ENCODE measurements at regions of chr15 and their contacts with region 1.

Region 1: DNA sequence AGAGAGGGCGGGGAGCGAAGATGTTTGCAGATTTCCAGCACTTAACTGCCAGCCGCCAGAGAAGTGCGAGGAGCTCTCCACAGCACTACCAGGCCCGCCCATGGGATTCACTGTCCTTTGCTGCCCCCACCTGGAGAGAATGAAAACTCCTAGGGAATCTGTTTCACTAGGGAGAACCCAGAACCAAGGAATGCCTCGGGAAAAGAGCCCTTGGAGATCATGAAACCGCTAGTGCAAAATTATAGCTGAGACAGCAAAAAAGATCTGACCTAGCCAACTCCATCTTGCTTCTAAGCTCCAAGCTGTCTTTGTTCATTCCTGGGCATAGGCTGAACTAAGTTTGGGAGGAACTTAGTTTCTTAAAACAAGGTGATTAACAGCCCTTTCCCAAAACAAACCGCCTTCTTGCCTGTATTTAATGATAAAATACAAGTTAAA is 82.6 kb upstream of the GCNT3 start:
- DNase-seq: peak; percentile 56 to 65 (median 61)
- H3K4me3 ChIP-seq: no peak overlapping the region
- H3K4me3 Mint-ChIP-seq: no peak overlapping the region
- H3K27ac ChIP-seq: no peak overlapping the region
- H3K27ac Mint-ChIP-seq: peak overlapping the region in 1 of 7 donors; percentile 12
- H3K4me1 ChIP-seq: peaks cover 14% of the 10 kb centered on the region
- H3K4me1 Mint-ChIP-seq: peaks cover 9 to 16% (median 13%) of the 10 kb centered on the region in 4 donors
- H3K27me3 ChIP-seq: no peaks in the 10 kb centered on the region
- H3K27me3 Mint-ChIP-seq: peaks cover 0 to 3% of the 10 kb centered on the region in 2 donors

Region 2: GRCh38 chr15:57561041-57561711 is 1967.8 kb before region 1 on chr15:
- CTCF ChIA-PET with region 1: no interaction called
- POLR2A ChIA-PET with region 1: no interaction called
- intact Hi-C with region 1: loop called (anchors 10 kb)
- DNase-seq: peak; percentile 60 to 65 (median 62)
- H3K4me3 ChIP-seq: no peak overlapping the region
- H3K4me3 Mint-ChIP-seq: peak overlapping the region in 7 of 8 donors; percentile 14 to 64 (median 55)
- H3K27ac ChIP-seq: no peak overlapping the region
- H3K27ac Mint-ChIP-seq: peak overlapping the region in 4 of 7 donors; percentile 11 to 59 (median 38)
- H3K4me1 ChIP-seq: peaks cover 24% of the 10 kb centered on the region
- H3K4me1 Mint-ChIP-seq: peaks cover 25 to 43% (median 32%) of the 10 kb centered on the region in 4 donors
- H3K27me3 ChIP-seq: no peaks in the 10 kb centered on the region
- H3K27me3 Mint-ChIP-seq: peaks cover 0 to 1% of the 10 kb centered on the region in 2 donors

Region 3: DNA sequence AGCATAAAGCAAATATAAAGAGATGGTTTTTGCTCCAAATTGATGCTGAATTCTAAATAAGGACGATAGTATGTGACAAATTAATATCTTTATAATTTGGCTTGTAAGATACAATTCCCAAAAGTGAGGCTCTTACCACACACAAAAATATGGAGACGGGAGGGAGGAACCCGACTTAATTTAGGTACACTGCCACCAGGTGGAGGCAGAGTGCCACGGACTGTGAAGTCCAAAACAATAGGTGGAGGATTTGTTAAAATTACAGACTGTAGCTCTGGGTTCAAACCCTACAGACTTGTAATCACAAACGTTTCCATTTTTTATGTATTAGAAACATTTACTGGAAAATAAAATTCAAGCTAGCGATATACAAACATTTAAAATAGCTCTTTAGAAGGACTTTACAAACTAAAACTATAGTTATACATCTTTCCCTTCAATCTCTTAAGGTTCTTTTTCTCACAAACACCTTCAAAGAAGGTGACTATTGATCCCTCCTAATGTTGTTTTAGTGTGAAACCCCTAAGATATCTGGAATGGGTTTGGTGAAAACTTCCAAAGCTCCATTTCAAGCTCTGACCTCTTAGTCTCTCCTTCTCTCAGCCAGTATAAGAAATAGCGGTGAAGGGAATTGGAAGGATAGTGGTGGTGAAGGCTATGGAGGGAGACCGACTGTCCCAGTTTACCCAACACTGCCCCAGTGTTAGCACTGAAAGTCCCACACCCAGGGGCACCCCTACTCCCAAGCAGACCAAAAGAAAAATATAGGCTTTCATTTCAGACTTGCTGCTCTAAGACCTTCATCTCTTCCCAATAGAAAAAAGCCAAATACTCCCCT is 1301.1 kb before region 1 on chr15:
- CTCF ChIA-PET with region 1: interaction called, 36 read pairs
- POLR2A ChIA-PET with region 1: no interaction called
- intact Hi-C with region 1: no loop called
- DNase-seq: peak in 4 of 5 donors; percentile 49 to 58 (median 54)
- H3K4me3 ChIP-seq: no peak overlapping the region
- H3K4me3 Mint-ChIP-seq: no peak overlapping the region
- H3K27ac ChIP-seq: no peak overlapping the region
- H3K27ac Mint-ChIP-seq: no peak overlapping the region
- H3K4me1 ChIP-seq: no peaks in the 10 kb centered on the region
- H3K4me1 Mint-ChIP-seq: peaks cover 4 to 14% (median 11%) of the 10 kb centered on the region in 4 donors
- H3K27me3 ChIP-seq: no peaks in the 10 kb centered on the region
- H3K27me3 Mint-ChIP-seq: peaks cover 7 to 17% of the 10 kb centered on the region in 2 donors

Region 4: DNA sequence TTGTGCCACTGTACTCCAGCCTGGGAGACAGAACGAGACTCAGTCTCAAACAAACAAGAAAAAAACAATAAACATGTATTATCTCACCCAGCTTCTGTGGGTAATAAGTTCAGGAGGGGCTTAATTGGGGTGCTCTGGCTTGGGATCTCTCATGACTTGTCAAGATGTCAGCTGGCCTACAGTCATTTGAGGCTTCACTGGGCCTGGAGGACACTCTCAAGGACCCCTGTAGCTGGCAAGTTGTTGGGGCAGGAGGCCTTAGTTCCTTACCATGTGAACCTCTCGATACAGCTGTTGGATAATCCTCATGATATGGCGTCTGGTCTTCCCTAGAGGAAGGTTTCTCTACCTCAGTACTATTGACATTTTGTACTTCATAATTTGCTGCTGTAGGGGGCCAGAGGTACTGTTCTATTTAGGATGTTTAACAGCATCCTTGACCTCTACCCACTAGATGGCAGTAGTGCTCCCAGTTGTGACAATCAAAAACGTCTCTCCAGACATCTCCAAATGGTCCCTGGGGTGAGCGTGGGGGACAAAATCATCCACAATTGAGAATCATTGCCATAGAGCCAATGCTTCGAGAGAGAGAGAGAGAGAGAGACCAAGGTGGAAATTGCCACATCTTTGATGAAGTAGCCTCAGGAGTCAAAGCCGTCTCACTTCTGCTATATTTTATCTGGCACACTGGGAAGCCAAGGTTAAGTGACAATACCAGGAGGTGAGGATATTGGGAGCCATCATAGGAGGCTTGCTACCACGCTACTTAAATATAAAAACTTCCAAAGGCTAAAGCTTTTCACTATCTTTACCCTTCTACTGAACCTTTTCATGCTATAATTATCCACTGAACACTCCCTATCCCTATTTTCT is 571.6 kb before region 1 on chr15:
- CTCF ChIA-PET with region 1: interaction called, 33 read pairs
- POLR2A ChIA-PET with region 1: no interaction called
- intact Hi-C with region 1: loop called (anchors 1 kb)
- DNase-seq: peak; percentile 63 to 69 (median 66)
- H3K4me3 ChIP-seq: no peak overlapping the region
- H3K4me3 Mint-ChIP-seq: peak overlapping the region in 1 of 8 donors; percentile 41
- H3K27ac ChIP-seq: no peak overlapping the region
- H3K27ac Mint-ChIP-seq: peak overlapping the region in 2 of 7 donors; percentile 70 to 84
- H3K4me1 ChIP-seq: peaks cover 4% of the 10 kb centered on the region
- H3K4me1 Mint-ChIP-seq: peaks cover 5 to 6% (median 6%) of the 10 kb centered on the region in 4 donors
- H3K27me3 ChIP-seq: no peaks in the 10 kb centered on the region
- H3K27me3 Mint-ChIP-seq: peaks cover 0 to 1% of the 10 kb centered on the region in 2 donors

Region 5: DNA sequence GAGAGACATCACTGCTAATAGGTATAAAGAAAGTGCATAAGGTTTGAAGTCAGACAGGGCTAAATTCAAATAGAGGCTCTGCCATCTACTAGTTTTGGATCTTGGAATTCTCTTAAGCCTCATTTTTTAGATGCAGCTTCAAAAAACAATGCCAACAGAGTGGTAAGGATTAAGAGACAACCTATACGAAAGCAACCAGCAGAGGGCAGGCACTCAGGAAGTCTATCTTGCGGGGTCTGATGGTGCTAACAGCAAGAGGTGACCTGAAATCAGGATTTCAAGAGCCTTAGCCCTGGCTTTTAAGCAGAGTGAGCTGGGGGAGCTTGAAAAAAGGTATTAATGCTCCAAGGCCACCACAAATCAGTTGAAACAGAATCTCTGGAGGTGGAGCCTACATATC is 281.6 kb before region 1 on chr15:
- CTCF ChIA-PET with region 1: interaction called, 12 read pairs
- POLR2A ChIA-PET with region 1: no interaction called
- intact Hi-C with region 1: loop called (anchors 1 kb)
- DNase-seq: peak; percentile 26 to 43 (median 36)
- H3K4me3 ChIP-seq: no peak overlapping the region
- H3K4me3 Mint-ChIP-seq: no peak overlapping the region
- H3K27ac ChIP-seq: no peak overlapping the region
- H3K27ac Mint-ChIP-seq: no peak overlapping the region
- H3K4me1 ChIP-seq: peaks cover 6% of the 10 kb centered on the region
- H3K4me1 Mint-ChIP-seq: peaks cover 0 to 4% (median 2%) of the 10 kb centered on the region in 4 donors
- H3K27me3 ChIP-seq: no peaks in the 10 kb centered on the region
- H3K27me3 Mint-ChIP-seq: no peaks in the 10 kb centered on the region

Region 6: DNA sequence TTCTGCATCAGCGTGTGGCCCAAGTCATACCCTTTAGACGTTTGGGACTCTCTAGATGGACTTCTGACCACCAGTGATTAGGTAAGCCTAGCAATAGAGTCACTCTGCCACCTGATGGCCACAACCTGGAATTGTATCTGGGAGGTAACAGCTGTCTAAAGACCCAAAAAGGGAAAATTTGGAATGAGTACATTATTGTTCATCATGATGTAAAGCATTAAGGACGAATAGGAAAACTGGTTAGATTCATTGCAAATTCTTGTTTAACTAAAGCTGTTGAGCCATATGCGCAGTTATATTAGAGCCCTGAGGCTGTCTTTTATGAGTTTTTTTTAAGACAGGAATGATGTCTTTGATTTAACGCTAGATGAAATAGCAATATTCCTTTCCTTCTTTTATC is 27.4 kb before region 1 on chr15:
- CTCF ChIA-PET with region 1: interaction called, 41 read pairs
- POLR2A ChIA-PET with region 1: no interaction called
- intact Hi-C with region 1: no loop called
- DNase-seq: no peak
- H3K4me3 ChIP-seq: no peak overlapping the region
- H3K4me3 Mint-ChIP-seq: no peak overlapping the region
- H3K27ac ChIP-seq: no peak overlapping the region
- H3K27ac Mint-ChIP-seq: no peak overlapping the region
- H3K4me1 ChIP-seq: no peaks in the 10 kb centered on the region
- H3K4me1 Mint-ChIP-seq: no peaks in the 10 kb centered on the region
- H3K27me3 ChIP-seq: no peaks in the 10 kb centered on the region
- H3K27me3 Mint-ChIP-seq: peaks cover 1 to 4% of the 10 kb centered on the region in 2 donors

Region 7: DNA sequence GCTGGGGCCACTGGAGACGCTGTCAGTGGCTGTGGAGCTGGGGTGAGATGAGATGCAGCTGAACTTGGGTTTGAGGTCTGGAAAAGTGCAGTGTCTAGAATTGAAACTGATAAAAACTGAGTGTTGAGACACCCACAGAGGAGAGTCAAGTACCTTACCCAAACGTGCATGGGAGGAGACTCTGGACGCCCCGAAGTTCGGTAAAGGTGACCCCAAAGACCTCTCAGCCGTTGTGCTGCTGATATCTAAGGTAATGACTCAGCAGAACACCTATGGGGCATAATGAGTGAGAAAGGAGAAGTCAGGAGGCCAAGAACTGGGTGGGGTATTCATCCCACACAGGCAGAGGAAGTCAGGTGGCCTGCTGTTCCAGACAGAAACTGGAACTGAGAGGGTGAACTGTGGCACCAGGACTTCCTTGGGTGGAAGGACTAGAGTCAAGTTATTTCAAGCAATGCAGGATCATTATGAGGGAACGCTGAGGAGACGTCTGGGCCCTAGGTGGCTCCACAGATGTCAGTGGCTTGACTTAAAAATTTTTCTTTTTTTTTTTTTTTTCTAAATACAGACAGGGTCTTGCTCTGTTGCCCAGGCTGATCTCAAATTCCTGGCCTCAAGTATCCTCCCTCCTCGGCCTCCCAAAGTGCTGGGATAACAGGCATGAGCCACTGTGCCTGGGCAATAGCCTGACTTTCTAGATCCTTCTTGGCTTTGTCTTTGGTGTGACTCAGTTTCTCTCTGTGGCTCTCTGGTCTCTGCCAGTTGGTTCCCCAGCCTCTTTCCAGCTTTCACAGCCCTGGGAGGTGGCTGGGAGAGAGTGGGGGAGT is 14.9 kb after region 1 on chr15:
- CTCF ChIA-PET with region 1: interaction called, 12 read pairs
- POLR2A ChIA-PET with region 1: interaction called, 3 read pairs
- intact Hi-C with region 1: no loop called
- DNase-seq: no peak
- H3K4me3 ChIP-seq: no peak overlapping the region
- H3K4me3 Mint-ChIP-seq: no peak overlapping the region
- H3K27ac ChIP-seq: no peak overlapping the region
- H3K27ac Mint-ChIP-seq: peak overlapping the region in 1 of 7 donors; percentile 16
- H3K4me1 ChIP-seq: no peaks in the 10 kb centered on the region
- H3K4me1 Mint-ChIP-seq: peaks cover 0 to 8% (median 5%) of the 10 kb centered on the region in 4 donors
- H3K27me3 ChIP-seq: no peaks in the 10 kb centered on the region
- H3K27me3 Mint-ChIP-seq: peaks cover 5 to 14% of the 10 kb centered on the region in 2 donors